HCT116 (cell line): ENCODE measurements at regions of chr19 and their contacts with region 1.

Region 1: DNA sequence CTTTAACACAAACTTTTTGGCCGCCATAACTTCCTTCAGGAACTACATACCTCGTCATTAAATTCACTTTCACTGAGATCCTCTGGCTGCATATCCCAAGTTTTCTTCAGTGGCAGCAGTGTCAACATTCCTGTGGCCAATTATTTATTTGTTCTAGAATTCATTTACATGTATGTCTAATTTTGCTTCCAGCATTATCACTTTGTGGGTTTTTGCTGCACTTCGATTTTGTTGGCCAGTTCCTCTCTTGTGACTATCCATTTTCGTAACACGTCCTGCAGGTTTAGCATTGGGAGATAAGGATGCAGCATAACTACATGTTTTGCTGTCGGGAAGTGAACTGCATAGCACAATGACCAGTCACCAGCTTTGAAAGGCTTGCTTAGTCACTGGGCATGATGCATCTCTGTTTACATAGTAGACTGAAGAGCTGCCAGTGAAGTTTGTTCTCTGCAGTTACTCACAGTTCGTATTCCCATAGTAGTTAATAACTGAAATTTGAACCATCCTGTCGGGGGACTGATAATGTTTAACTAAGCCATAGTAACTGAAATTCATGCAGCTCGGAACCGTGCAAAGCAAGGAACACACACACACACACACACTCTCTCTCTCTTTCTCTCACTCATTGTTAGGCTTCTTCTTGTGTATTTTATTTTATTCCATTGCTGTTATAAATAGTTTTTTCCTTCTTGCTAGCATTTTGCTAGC is 28.3 kb downstream of the ZNF507 start:
- DNase-seq: peak; percentile 94
- ATAC-seq: peak; percentile 99
- H3K4me3 ChIP-seq: peak overlapping the region in 1 of 2 experiments; percentile 42; a peak in 2 of 4 replicates
- H3K27ac ChIP-seq: peak overlapping the region; percentile 68
- H3K4me1 ChIP-seq: peaks cover 31 to 35% of the 10 kb centered on the region in 2 experiments
- H3K27me3 ChIP-seq: no peaks in the 10 kb centered on the region
- CTCF ChIP-seq: no peak
- POLR2A ChIP-seq: no peak
- RAD21 ChIP-seq: no peak

Region 2: DNA sequence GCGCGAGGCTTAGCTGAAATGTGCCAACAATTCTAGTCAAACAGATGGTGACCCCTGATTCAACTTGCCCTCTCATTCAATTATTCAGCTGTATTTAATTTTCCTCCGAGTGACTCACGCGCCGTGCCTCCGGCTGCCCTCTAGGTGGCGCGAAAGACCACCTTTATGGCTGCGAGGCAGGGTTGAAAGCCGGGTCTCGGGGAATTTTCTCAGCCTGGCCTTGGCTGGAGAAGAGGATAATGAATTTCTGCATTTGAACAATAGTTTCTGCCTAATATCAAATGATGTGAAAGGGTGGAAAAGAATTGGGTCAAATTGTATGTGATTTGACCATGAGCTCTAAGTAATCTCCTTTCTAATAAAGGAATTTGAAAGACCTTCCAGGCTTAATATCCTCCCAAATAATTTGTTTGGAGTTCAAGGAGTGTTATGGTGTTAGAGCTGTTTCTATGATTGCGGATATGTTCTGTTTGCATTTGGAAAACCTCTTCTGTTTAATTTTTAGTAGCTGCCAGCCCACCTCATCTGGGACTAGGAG is 1690.7 kb before region 1 on chr19:
- CTCF ChIA-PET with region 1: no interaction called
- POLR2A ChIA-PET with region 1: no interaction called
- RAD21 ChIA-PET with region 1: no interaction called
- intact Hi-C with region 1: loop called (anchors 1 kb)
- DNase-seq: peak; percentile 12
- ATAC-seq: peak; percentile 83
- H3K4me3 ChIP-seq: no peak overlapping the region
- H3K27ac ChIP-seq: no peak overlapping the region
- H3K4me1 ChIP-seq: no peaks in the 10 kb centered on the region
- H3K27me3 ChIP-seq: peaks cover 4% of the 10 kb centered on the region; the same call in 1 of the 2 replicates
- CTCF ChIP-seq: peak; percentile 53 to 96 (median 79); a peak in 5 of 6 replicates
- POLR2A ChIP-seq: no peak
- RAD21 ChIP-seq: peak; percentile 73

Region 3: DNA sequence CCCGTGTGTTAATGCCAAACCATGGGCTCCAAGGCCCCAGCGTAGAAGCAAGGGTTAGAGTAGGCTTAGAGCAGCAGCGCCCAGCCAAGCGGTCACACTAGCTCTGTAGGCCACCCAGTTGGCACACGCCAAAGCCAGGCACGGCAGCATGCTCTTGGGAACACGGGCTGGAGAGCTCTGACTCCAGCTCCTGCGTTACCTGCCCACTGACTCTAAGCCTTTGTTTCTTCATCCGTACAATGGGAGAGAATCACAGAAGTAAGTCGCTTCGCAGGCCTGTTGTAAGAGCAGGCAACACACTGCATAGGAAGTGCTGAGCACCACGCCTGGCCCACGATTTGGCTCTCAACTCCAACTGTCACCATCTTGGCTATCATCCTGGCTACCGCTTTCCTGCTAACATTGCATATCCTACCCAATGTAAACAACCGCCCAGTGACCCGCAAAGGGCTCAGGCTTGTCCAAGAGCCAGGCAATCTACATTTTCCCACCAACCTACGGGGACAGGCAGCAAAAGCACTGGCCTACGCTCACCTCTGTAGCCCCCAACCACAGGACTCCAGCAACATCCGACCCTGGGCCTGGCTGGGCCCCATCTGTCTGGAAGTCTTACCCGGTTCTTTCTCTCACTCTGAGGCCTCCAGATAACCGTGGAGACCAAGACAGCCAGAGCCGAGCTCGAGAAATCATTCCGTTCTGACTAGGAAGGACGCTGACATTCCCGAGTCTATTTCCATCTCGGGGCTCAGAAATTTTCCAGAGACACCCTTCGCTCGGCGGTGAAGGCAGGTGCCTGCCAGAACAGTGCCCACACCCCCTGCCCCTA is 119.8 kb before region 1 on chr19:
- CTCF ChIA-PET with region 1: no interaction called
- POLR2A ChIA-PET with region 1: no interaction called
- RAD21 ChIA-PET with region 1: no interaction called
- intact Hi-C with region 1: no loop called
- DNase-seq: no peak
- ATAC-seq: no peak
- H3K4me3 ChIP-seq: no peak overlapping the region
- H3K27ac ChIP-seq: no peak overlapping the region
- H3K4me1 ChIP-seq: no peaks in the 10 kb centered on the region
- H3K27me3 ChIP-seq: no peaks in the 10 kb centered on the region
- CTCF ChIP-seq: no peak
- POLR2A ChIP-seq: no peak
- RAD21 ChIP-seq: no peak

Region 4: DNA sequence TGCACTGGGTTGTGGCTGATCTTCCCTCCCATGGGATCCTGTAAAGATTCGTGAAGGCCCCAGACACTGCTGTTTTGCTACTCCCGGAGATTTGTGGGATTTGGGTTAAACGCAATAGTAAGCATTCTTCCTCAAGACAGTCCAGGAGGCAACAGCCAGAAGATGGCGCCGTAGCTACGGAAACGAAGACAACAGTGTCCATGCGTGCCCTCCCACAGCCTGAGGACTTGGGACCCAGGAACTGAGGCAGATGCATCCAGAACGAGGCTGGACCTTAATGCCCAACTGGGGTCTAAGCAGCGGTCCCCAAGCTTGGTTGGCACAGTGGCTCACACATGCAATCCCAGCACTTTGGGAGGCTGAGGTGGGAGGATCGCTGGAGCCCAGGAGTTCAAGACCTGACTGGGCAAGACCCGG is 85.9 kb before region 1 on chr19:
- CTCF ChIA-PET with region 1: no interaction called
- POLR2A ChIA-PET with region 1: no interaction called
- RAD21 ChIA-PET with region 1: no interaction called
- intact Hi-C with region 1: loop called (anchors 1 kb)
- DNase-seq: peak; percentile 61
- ATAC-seq: peak; percentile 98
- H3K4me3 ChIP-seq: no peak overlapping the region
- H3K27ac ChIP-seq: no peak overlapping the region
- H3K4me1 ChIP-seq: no peaks in the 10 kb centered on the region
- H3K27me3 ChIP-seq: 0 out of 2 replicates have a peak, but pooled peaks cover 3% of the 10 kb centered on the region
- CTCF ChIP-seq: peak; percentile 41 to 65 (median 43); a peak in 5 of 6 replicates
- POLR2A ChIP-seq: no peak
- RAD21 ChIP-seq: peak; percentile 74

Region 5: GRCh38 chr19:32339988-32340874 is 33.5 kb before region 1 on chr19:
- CTCF ChIA-PET with region 1: interaction called, 4 read pairs
- POLR2A ChIA-PET with region 1: no interaction called
- RAD21 ChIA-PET with region 1: no interaction called
- intact Hi-C with region 1: loop called (anchors 2 kb)
- DNase-seq: no peak
- ATAC-seq: peak; percentile 96
- H3K4me3 ChIP-seq: no peak overlapping the region
- H3K27ac ChIP-seq: no peak overlapping the region
- H3K4me1 ChIP-seq: peaks cover 3 to 11% of the 10 kb centered on the region in 2 experiments; a peak in 3 of 4 replicates
- H3K27me3 ChIP-seq: no peaks in the 10 kb centered on the region
- CTCF ChIP-seq: peak; percentile 29 to 78 (median 73); a peak in 5 of 6 replicates
- POLR2A ChIP-seq: no peak
- RAD21 ChIP-seq: peak; percentile 53